WTC11 (cell line): ENCODE measurements at regions of chr11 and their contacts with region 1.

Region 1: DNA sequence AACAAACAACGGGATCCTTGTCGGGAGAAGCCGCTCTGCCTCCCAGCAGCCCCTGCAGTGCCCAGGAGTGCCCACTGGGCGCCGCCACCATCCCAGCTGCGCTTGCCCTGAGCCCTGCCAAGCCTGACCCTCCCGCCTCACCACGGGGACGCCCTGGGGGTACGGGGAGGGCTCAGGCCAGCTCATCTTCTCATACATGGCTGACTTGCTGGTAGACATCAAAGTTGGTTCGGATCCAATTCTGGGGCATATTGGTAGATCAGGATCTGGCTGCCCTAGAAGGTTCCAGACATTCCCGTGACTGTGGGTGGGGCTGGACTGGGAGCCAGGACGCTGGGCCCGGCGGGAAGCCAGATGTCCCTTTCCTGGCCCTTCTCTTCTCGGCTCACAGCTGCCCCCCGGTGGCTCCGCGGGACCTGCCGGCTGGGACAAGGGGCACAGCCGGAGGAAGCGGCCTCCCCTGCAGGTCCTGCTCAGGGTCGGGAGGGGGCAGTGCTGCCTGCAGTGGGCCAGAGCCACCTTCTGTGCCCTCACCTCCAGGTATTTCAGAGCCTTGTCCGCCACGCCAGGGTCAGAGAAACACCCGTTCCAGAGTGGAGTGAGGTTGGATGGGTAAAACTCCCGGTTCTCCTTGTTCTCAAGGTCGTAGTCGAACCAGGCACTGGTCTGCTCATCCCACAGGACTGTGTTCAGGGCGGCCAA is 10.6 kb upstream of the TREH start:
- DNase-seq: peak; percentile 96
- ATAC-seq: peak; percentile 86
- H3K4me3 Mint-ChIP-seq: peak overlapping the region; percentile 56
- H3K27ac Mint-ChIP-seq: peak overlapping the region; percentile 41; the same call in 1 of the 2 replicates
- H3K4me1 Mint-ChIP-seq: peaks cover 42% of the 10 kb centered on the region
- H3K27me3 Mint-ChIP-seq: peaks cover 14% of the 10 kb centered on the region; the same call in 1 of the 2 replicates
- CTCF ChIP-seq: peak; percentile 81

Region 2: GRCh38 chr11:118659314-118659952 is 30.6 kb before region 1 on chr11:
- CTCF ChIA-PET with region 1: interaction called, 43 read pairs
- POLR2A ChIA-PET with region 1: no interaction called
- DNase-seq: peak; percentile 99
- ATAC-seq: peak; percentile 88
- H3K4me3 Mint-ChIP-seq: peak overlapping the region; percentile 16; the same call in 1 of the 2 replicates
- H3K27ac Mint-ChIP-seq: no peak overlapping the region
- H3K4me1 Mint-ChIP-seq: peaks cover 41% of the 10 kb centered on the region
- H3K27me3 Mint-ChIP-seq: peaks cover 3% of the 10 kb centered on the region; the same call in 1 of the 2 replicates
- CTCF ChIP-seq: peak; percentile 89

Region 3: DNA sequence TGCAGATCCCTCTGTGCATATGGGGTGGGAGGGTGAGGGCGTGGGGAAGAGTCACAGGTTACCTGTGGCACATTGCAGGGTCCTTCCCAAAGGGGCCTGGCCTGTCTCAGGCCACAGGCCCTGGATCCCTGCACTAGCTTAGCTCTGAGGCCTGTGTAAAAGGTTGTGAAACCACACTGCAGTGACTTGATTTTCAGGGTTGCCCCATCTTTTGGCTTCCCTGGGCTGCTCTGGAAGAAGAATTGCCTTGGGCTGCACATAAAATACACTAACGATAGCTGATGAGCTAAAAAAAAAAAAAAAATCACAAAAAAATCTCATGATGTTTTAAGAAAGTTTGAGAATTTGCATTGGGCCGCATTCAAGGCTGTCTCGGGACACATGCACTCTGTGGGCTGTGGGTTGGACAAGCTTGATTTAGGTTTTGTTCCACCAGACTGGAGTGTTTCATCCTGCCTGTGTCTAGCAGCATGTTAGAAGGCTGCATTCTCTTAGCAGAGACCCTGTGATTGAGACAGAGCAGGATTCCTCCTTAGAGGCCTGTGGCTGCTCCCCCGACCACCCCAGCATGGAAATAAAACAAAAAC is 25.3 kb after region 1 on chr11:
- CTCF ChIA-PET with region 1: interaction called, 18 read pairs
- POLR2A ChIA-PET with region 1: interaction called, 4 read pairs
- DNase-seq: no peak
- ATAC-seq: peak; percentile 71
- H3K4me3 Mint-ChIP-seq: peak overlapping the region; percentile 89
- H3K27ac Mint-ChIP-seq: peak overlapping the region; percentile 99
- H3K4me1 Mint-ChIP-seq: peaks cover 65% of the 10 kb centered on the region
- H3K27me3 Mint-ChIP-seq: no peaks in the 10 kb centered on the region
- CTCF ChIP-seq: no peak

Region 4: DNA sequence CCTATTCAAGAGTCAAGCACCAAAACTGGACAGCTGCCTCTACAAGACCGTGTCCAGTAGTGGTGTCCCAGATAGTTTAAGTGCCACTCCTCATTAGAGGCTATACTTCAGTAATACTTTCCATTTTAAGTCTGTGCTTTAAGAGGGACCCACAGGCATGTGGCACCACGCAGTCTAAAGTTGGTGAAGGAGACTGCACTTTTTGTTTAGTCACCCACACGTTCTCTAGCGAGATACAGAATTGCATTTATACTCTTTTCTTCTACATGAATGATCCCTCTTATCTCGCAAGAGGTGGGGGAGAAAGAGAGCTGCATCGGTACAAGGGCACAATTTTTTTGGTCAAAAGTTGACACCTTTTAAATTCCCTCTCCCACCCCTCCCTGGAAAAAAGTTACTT is 59.4 kb after region 1 on chr11:
- CTCF ChIA-PET with region 1: interaction called, 43 read pairs
- POLR2A ChIA-PET with region 1: interaction called, 5 read pairs
- DNase-seq: no peak
- ATAC-seq: no peak
- H3K4me3 Mint-ChIP-seq: no peak overlapping the region
- H3K27ac Mint-ChIP-seq: peak overlapping the region; percentile 75
- H3K4me1 Mint-ChIP-seq: peaks cover 31% of the 10 kb centered on the region
- H3K27me3 Mint-ChIP-seq: no peaks in the 10 kb centered on the region
- CTCF ChIP-seq: no peak

Region 5: GRCh38 chr11:118791111-118791965 is 101.3 kb after region 1 on chr11 and contains the start of gene DDX6:
- CTCF ChIA-PET with region 1: interaction called, 63 read pairs
- POLR2A ChIA-PET with region 1: interaction called, 8 read pairs
- DNase-seq: peak; percentile 91
- ATAC-seq: peak; percentile 41
- H3K4me3 Mint-ChIP-seq: peak within 1 kb of the TSS; percentile 98
- H3K27ac Mint-ChIP-seq: peak within 1 kb of the TSS; percentile 98
- H3K4me1 Mint-ChIP-seq: peaks cover 24% of the 10 kb centered on the region
- H3K27me3 Mint-ChIP-seq: no peaks in the 10 kb centered on the region
- CTCF ChIP-seq: no peak
- total RNA-seq, gene DDX6: 151 to 167 TPM (median 166 TPM) in 3 replicates

Region 6: GRCh38 chr11:118928108-118928870 is 238.3 kb after region 1 on chr11:
- CTCF ChIA-PET with region 1: interaction called, 13 read pairs
- POLR2A ChIA-PET with region 1: interaction called, 3 read pairs
- DNase-seq: peak; percentile 94
- ATAC-seq: peak; percentile 53
- H3K4me3 Mint-ChIP-seq: peak overlapping the region; percentile 92
- H3K27ac Mint-ChIP-seq: peak overlapping the region; percentile 93
- H3K4me1 Mint-ChIP-seq: peaks cover 48% of the 10 kb centered on the region
- H3K27me3 Mint-ChIP-seq: peaks cover 24% of the 10 kb centered on the region
- CTCF ChIP-seq: peak; percentile 90